Activated T-helper 1 cell treated with anti-CD3 and anti-CD28 coated beads, Interleukin-12 subunit alpha, Interleukin-12 subunit beta, Interleukin-2, Interleukin-4 antibody, amounts not matched to agents 30 ng/mL and 10 ng/mL and 1 ng/mL, durations not matched to agents 14 hours and 24 hours and 36 hours (primary cell): ENCODE measurements at regions of chr5 and their contacts with region 1.

Region 1: DNA sequence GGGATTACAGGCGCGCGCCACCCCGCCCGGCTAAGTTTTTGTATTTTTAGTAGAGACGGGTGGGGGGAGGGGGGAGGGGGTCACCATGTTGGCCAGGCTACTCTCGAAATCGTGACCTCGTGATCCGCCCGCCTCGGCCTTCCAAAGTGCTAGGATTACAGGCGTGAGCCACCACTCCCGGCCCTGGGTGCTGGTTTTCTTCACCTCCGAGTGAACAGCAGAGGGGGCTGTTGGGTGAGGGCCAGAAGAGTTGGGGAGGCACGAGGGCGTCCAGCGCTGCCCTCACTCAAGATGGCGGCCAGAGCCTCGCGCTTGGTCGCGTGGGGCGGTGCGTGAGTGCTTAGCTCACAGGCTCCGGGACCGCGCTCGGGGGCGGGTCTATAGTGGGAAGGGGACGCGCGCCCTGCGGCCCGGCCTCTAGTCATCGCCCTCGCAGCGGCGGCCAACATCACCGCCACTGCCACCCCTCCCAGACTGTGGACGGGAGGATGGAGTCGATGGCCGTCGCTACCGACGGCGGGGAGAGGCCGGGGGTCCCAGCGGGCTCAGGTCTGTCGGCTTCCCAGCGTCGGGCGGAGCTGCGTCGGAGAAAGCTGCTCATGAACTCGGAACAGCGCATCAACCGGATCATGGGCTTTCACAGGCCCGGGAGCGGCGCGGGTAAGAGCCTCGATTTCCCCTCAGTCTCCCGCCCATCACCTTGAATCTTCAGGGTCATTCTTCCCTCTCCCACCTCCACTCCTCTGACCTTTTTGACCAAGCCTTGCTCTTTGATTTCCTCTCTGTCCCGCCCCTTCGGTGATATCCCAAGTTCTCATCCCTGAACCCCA is at the start of gene CAMLG:
- DNase-seq: peak; percentile 98
- H3K4me3 Mint-ChIP-seq: peak within 1 kb of the TSS; percentile 94
- H3K27ac Mint-ChIP-seq: peak within 1 kb of the TSS; percentile 90
- H3K4me1 Mint-ChIP-seq: peaks cover 32% of the 10 kb centered on the region
- H3K27me3 Mint-ChIP-seq: no peaks in the 10 kb centered on the region
- total RNA-seq, gene CAMLG: 25.9 and 26.9 TPM in 2 replicates

Region 2: DNA sequence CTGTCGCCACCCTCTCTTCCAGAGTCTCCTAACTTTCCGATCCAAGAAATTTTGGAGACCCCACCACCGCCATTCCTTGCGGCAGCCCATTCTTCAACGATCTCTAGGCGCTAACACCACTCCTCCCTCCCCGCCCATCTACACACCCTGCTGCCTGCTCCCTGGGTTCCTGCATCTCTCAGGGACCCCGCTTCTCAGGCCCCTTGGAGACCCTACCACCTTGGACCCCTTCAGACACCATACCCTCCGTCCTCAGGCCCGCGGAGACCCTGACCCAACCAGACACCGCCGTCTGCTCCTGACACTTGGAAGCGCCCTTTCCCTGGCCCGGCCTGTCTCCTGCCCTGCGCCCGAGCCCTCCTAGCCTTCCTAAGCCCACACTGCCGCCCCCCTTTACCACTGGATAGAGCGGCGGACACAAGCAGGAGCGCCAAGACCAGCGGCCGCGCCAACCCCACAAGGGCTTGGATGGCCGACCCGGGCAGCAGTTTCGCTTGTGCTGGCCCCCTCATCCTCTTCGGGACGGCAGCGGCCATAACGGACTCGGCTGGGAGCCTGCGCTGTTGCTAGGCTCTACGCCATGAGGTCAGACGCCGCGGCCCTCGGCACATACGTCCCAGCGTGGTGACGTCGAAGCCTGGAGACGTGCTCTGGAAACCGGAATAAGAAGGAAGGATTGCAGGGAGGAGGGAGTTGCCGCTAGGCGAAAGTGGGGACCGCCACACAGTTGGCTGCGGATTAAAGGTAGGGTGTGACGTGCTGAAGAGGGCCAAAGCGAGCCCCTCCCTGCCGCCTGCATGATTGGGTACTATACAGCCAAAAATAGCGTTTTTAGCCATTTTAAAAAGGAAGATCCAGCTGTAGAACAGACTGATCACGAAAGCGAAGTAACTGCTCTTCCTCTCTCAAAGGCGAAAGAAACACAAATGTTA is 770.0 kb before region 1 on chr5 and contains the start of gene C5orf15:
- intact Hi-C with region 1: loop called (anchors 2 kb)
- DNase-seq: peak; percentile 92
- H3K4me3 Mint-ChIP-seq: peak within 1 kb of the TSS; percentile 98
- H3K27ac Mint-ChIP-seq: peak within 1 kb of the TSS; percentile 96
- H3K4me1 Mint-ChIP-seq: peaks cover 55% of the 10 kb centered on the region
- H3K27me3 Mint-ChIP-seq: no peaks in the 10 kb centered on the region
- total RNA-seq, gene C5orf15: 50.0 and 50.8 TPM in 2 replicates

Region 3: DNA sequence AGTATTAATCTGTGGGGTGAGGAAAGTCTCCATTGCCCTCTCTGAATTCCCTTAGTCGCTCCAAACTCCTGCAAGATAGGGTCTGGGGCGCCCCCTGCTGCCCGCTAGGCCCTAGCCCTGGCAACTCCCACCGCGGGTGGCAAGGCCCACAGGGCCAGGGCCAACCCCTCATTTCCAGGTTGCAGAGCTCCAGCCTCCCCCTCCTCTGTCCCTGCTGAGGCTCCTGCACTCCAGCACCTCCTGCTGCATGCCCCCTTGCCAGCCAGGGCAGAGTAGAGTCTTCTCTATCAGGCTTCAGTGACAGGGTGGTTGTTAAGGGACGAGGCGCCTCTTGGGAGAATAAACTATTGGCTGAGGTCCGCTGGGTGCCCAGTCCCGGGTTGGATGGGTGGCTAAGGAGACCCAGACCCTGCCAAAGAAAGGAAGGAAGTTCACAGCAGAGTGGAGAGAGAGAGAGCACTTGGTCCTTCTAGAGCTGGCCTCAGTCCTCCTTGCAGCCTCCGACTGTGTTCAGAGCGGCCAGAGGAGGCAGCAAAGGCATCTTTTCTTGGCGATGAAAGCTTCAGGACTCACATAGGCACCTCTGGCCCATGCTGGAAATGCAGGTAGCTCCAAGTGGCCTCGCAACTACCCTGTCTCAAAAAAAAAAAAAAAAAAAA is 151.4 kb before region 1 on chr5:
- intact Hi-C with region 1: loop called (anchors 2 kb)
- DNase-seq: peak; percentile 72
- H3K4me3 Mint-ChIP-seq: no peak overlapping the region
- H3K27ac Mint-ChIP-seq: peak overlapping the region; percentile 52
- H3K4me1 Mint-ChIP-seq: peaks cover 14% of the 10 kb centered on the region
- H3K27me3 Mint-ChIP-seq: no peaks in the 10 kb centered on the region

Region 4: GRCh38 chr5:134626369-134627014 is 111.9 kb before region 1 on chr5:
- intact Hi-C with region 1: no loop called
- DNase-seq: no peak
- H3K4me3 Mint-ChIP-seq: no peak overlapping the region
- H3K27ac Mint-ChIP-seq: peak overlapping the region; percentile 27
- H3K4me1 Mint-ChIP-seq: peaks cover 21% of the 10 kb centered on the region
- H3K27me3 Mint-ChIP-seq: no peaks in the 10 kb centered on the region

Region 5: DNA sequence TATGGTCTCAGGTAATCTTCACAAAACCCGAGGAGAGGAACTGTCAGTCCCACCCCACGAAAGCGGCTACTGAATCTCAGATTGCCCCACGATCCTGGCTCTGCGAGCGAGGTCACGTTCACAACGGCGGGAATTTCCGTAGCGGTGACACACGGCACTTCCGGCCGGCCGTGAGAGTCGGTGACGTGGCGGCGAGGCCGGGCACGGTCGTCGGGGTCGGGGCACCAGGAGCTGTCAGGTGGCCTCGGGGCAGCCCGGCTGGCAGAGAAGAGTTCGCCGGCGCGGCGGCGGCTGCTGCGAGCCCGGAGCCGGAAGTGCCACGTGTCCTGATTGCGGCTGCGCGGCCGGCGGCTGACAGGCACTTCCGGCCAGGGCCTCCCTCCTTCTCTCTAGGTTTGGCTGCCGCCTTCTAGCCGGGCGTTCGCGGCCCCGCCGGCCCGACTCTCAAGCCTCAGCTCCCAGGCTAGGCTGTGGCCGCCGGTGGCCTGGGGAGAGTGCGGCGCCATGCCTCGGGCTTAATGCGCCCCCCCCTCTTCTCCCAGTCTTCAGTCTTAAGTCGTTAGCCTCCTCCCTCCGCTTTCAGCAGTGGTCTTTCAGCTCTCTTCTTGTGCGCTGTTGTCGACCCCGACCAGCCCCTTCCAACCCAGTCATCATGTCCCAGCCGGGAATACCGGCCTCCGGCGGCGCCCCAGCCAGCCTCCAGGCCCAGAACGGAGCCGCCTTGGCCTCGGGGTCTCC is 89.8 kb before region 1 on chr5 and contains the start of gene SEC24A:
- intact Hi-C with region 1: loop called (anchors 1 kb)
- DNase-seq: peak; percentile 89
- H3K4me3 Mint-ChIP-seq: peak within 1 kb of the TSS; percentile 87
- H3K27ac Mint-ChIP-seq: peak within 1 kb of the TSS; percentile 94
- H3K4me1 Mint-ChIP-seq: peaks cover 32% of the 10 kb centered on the region
- H3K27me3 Mint-ChIP-seq: no peaks in the 10 kb centered on the region
- total RNA-seq, gene SEC24A: 26.5 and 27.2 TPM in 2 replicates

Region 6: DNA sequence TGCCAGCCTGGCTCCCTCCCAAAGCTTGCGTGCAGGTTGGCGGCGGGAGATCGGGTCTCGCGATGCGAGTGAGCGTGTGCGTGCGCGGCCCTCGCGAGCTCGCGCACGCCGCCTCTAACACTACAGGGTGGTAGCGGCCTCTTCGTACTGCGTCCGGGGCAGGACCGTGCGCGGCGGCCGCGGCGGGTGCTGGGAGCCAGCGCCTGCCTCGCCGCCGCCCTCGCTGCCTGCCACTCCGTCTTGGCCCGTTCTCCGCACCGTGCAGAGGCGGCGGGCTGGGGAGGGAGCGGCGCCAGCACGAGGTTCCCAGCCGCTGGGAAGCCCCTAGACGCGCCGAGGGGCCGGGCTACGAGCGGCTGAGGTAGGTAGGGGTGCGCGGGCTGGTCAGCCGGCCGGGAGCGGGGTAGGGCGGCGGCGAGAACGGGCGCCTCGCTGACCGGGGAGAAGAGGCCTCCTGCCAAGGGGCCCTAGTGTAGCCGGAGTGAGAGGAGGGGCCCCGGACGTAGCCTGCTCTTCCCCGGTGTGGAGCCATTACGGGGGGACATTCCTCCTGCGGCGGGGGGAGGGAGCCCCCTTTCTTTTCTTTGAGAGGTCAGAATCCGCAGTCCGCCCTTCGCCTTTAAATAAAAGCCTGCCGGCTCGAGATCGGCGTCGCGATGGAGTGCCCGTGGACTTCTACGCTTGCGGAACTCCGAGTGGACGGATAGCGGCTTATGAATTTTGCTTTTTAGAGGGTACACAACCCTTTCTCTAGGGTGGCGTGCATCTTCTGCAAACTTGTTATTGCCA is 107.7 kb after region 1 on chr5 and contains the start of gene C5orf24:
- intact Hi-C with region 1: loop called (anchors 1 kb)
- DNase-seq: peak; percentile 90
- H3K4me3 Mint-ChIP-seq: peak within 1 kb of the TSS; percentile 97
- H3K27ac Mint-ChIP-seq: peak within 1 kb of the TSS; percentile 97
- H3K4me1 Mint-ChIP-seq: peaks cover 25% of the 10 kb centered on the region
- H3K27me3 Mint-ChIP-seq: no peaks in the 10 kb centered on the region
- total RNA-seq, gene C5orf24: 42.2 and 43.2 TPM in 2 replicates

Region 7: GRCh38 chr5:134904630-134905245 is 166.4 kb after region 1 on chr5 and contains the start of gene PCBD2:
- intact Hi-C with region 1: loop called (anchors 1 kb)
- DNase-seq: peak; percentile 91
- H3K4me3 Mint-ChIP-seq: peak within 1 kb of the TSS; percentile 94
- H3K27ac Mint-ChIP-seq: peak within 1 kb of the TSS; percentile 99
- H3K4me1 Mint-ChIP-seq: peaks cover 15% of the 10 kb centered on the region
- H3K27me3 Mint-ChIP-seq: no peaks in the 10 kb centered on the region
- total RNA-seq, gene PCBD2: 13.5 and 17.2 TPM in 2 replicates